ENCODE measurements at regions of chr10 and their contacts with region 1.

Region 1: GRCh38 chr10:18214691-18215563 is 74.7 kb downstream of the CACNB2 start:
- DNase-seq: no peak
- ATAC-seq: peak; percentile 84
- H3K4me3 ChIP-seq: no peak overlapping the region
- H3K27ac ChIP-seq: no peak overlapping the region
- H3K4me1 ChIP-seq: no peaks in the 10 kb centered on the region
- H3K27me3 ChIP-seq: no peaks in the 10 kb centered on the region; a peak in 1 of 4 replicates
- CTCF ChIP-seq: peak; percentile 66 to 82 (median 77)
- EP300 ChIP-seq: no peak
- POLR2A ChIP-seq: no peak
- RAD21 ChIP-seq: peak; percentile 84

Region 2: DNA sequence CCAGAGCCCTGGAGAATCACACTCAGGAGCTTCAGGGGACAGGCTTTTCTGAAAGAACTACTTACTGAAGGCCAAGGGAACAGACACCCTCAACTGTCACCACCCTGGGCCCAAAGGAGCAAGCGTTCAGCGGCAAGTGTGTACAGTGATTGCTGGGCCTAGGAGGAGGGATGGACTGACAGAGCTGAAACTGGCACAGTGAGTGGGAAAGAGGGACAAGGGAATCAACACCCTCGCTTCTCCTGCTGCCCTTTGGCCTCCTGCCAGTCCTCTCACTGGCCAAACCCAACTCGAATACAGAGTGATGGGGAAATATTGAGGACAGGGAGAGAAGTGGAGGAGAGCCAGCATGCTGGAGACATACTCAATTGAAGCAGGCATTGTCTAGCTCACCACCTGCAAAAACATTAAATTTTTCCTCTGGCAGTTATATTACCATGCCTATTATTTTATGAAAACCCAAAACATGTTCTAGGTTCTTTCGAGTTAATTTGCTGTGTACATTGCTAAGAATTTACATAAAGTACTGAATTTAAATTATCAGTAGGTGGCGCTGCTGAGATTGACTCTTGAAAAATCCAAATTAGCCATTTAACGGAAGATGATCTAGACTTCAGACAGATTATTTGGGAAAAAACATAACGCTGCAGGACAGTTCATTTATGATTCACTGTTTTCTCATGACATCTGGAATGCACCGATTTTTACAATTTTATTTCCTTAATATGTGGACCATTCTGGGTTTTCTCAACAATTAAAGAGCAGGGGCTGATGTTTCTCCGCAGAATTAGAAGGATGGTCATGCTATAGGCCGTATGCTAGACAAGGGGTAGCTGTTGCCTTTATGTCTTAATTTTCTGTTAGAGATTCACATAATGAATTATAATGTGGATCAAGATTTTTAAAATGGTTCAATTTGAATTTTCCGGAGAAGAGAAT is 477.6 kb before region 1 on chr10:
- CTCF ChIA-PET with region 1: interaction called, 5 read pairs
- POLR2A ChIA-PET with region 1: no interaction called
- RAD21 ChIA-PET with region 1: no interaction called
- SMC1A ChIA-PET with region 1: no interaction called
- in situ Hi-C with region 1: no loop called
- intact Hi-C with region 1: loop called (anchors 5 kb)
- DNase-seq: no peak
- ATAC-seq: peak; percentile 61
- H3K4me3 ChIP-seq: no peak overlapping the region
- H3K27ac ChIP-seq: no peak overlapping the region
- H3K4me1 ChIP-seq: no peaks in the 10 kb centered on the region
- H3K27me3 ChIP-seq: no peaks in the 10 kb centered on the region
- CTCF ChIP-seq: peak; percentile 40 to 63 (median 58); a peak in 5 of 6 replicates
- EP300 ChIP-seq: no peak
- POLR2A ChIP-seq: no peak
- RAD21 ChIP-seq: peak; percentile 31; the same call in 1 of the 2 replicates

Region 3: GRCh38 chr10:17805921-17806577 is 408.9 kb before region 1 on chr10:
- CTCF ChIA-PET with region 1: no interaction called
- POLR2A ChIA-PET with region 1: no interaction called
- RAD21 ChIA-PET with region 1: no interaction called
- SMC1A ChIA-PET with region 1: no interaction called
- in situ Hi-C with region 1: no loop called
- intact Hi-C with region 1: loop called (anchors 1 kb)
- DNase-seq: no peak
- ATAC-seq: peak; percentile 98
- H3K4me3 ChIP-seq: no peak overlapping the region
- H3K27ac ChIP-seq: no peak overlapping the region
- H3K4me1 ChIP-seq: no peaks in the 10 kb centered on the region
- H3K27me3 ChIP-seq: peaks cover 0 to 5% of the 10 kb centered on the region in 2 experiments; a peak in 2 of 4 replicates
- CTCF ChIP-seq: peak; percentile 39; a peak in 5 of 6 replicates
- EP300 ChIP-seq: no peak
- POLR2A ChIP-seq: no peak
- RAD21 ChIP-seq: peak; percentile 40

Region 4: GRCh38 chr10:17847585-17848296 is 367.2 kb before region 1 on chr10:
- CTCF ChIA-PET with region 1: interaction called, 15 read pairs
- POLR2A ChIA-PET with region 1: no interaction called
- RAD21 ChIA-PET with region 1: interaction called, 9 read pairs
- SMC1A ChIA-PET with region 1: interaction called, 7 read pairs
- in situ Hi-C with region 1: no loop called
- intact Hi-C with region 1: loop called (anchors 1 kb)
- DNase-seq: no peak
- ATAC-seq: peak; percentile 88
- H3K4me3 ChIP-seq: no peak overlapping the region
- H3K27ac ChIP-seq: no peak overlapping the region
- H3K4me1 ChIP-seq: no peaks in the 10 kb centered on the region
- H3K27me3 ChIP-seq: no peaks in the 10 kb centered on the region; a peak in 1 of 4 replicates
- CTCF ChIP-seq: peak; percentile 14 to 53 (median 38); a peak in 4 of 6 replicates
- EP300 ChIP-seq: no peak
- POLR2A ChIP-seq: no peak
- RAD21 ChIP-seq: peak; percentile 70

Region 5: DNA sequence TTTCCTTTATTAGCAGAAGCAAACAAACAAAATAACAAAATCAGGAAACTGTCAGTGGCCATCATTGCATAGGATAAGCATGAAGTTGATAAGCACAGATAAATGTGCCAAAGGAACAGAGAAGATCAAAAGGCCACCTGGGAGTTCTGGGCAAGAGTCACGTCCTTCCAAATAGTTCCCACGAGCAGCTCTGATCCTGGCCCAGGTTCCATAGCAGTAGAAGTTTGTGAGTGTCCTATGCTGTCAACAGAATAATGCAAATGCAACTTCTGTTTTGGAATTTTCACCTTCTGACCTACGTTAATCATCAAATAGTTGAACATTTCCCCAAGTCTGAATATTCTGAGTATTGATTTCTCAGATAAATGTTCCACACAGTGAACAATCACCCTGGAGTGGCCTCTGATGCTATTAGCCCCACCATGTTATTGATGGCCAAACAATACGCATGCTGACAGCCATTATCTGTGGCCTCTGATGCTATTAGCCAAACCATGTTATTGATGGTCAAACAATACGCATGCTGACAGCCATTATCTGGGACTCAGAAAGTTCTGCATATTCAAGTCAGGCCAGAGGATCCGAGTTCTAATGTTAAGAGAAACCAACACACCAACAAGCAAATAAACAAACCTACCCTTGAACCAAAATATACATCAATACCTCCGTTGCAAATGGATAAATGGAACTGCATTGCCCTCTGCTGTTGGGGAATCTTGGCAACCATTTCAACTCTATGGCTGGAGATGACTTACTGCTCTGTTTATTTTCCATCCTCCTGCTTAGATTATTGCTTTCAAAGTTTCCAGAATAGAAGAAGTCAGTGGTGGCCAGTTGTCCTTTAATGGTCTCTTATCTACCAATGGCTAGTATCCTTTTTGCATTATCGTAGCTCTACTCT is 342.5 kb before region 1 on chr10:
- CTCF ChIA-PET with region 1: interaction called, 5 read pairs
- POLR2A ChIA-PET with region 1: no interaction called
- RAD21 ChIA-PET with region 1: no interaction called
- SMC1A ChIA-PET with region 1: no interaction called
- in situ Hi-C with region 1: no loop called
- intact Hi-C with region 1: loop called (anchors 10 kb)
- DNase-seq: no peak
- ATAC-seq: peak; percentile 68
- H3K4me3 ChIP-seq: no peak overlapping the region
- H3K27ac ChIP-seq: no peak overlapping the region
- H3K4me1 ChIP-seq: no peaks in the 10 kb centered on the region
- H3K27me3 ChIP-seq: no peaks in the 10 kb centered on the region
- CTCF ChIP-seq: peak; percentile 33 to 52 (median 35); a peak in 4 of 6 replicates
- EP300 ChIP-seq: no peak
- POLR2A ChIP-seq: no peak
- RAD21 ChIP-seq: peak; percentile 51

Region 6: GRCh38 chr10:17910125-17910789 is 304.7 kb before region 1 on chr10:
- CTCF ChIA-PET with region 1: interaction called, 5 read pairs
- POLR2A ChIA-PET with region 1: no interaction called
- RAD21 ChIA-PET with region 1: interaction called, 3 read pairs
- SMC1A ChIA-PET with region 1: interaction called, 4 read pairs
- in situ Hi-C with region 1: no loop called
- intact Hi-C with region 1: loop called (anchors 1 kb)
- DNase-seq: peak; percentile 2
- ATAC-seq: peak; percentile 85
- H3K4me3 ChIP-seq: no peak overlapping the region
- H3K27ac ChIP-seq: no peak overlapping the region
- H3K4me1 ChIP-seq: no peaks in the 10 kb centered on the region
- H3K27me3 ChIP-seq: no peaks in the 10 kb centered on the region
- CTCF ChIP-seq: peak; percentile 51 to 54 (median 52); a peak in 5 of 6 replicates
- EP300 ChIP-seq: no peak
- POLR2A ChIP-seq: no peak
- RAD21 ChIP-seq: peak; percentile 69

Region 7: GRCh38 chr10:18179891-18180290 is 35.0 kb before region 1 on chr10:
- CTCF ChIA-PET with region 1: no interaction called
- POLR2A ChIA-PET with region 1: no interaction called
- RAD21 ChIA-PET with region 1: no interaction called
- SMC1A ChIA-PET with region 1: no interaction called
- in situ Hi-C with region 1: no loop called
- intact Hi-C with region 1: no loop called
- DNase-seq: no peak
- ATAC-seq: no peak
- H3K4me3 ChIP-seq: no peak overlapping the region
- H3K27ac ChIP-seq: no peak overlapping the region
- H3K4me1 ChIP-seq: no peaks in the 10 kb centered on the region
- H3K27me3 ChIP-seq: no peaks in the 10 kb centered on the region
- CTCF ChIP-seq: no peak
- EP300 ChIP-seq: no peak
- POLR2A ChIP-seq: no peak
- RAD21 ChIP-seq: no peak

Region 8: GRCh38 chr10:18279173-18279572 is 64.2 kb after region 1 on chr10:
- CTCF ChIA-PET with region 1: no interaction called
- POLR2A ChIA-PET with region 1: no interaction called
- RAD21 ChIA-PET with region 1: no interaction called
- SMC1A ChIA-PET with region 1: no interaction called
- in situ Hi-C with region 1: no loop called
- intact Hi-C with region 1: no loop called
- DNase-seq: no peak
- ATAC-seq: no peak
- H3K4me3 ChIP-seq: no peak overlapping the region
- H3K27ac ChIP-seq: no peak overlapping the region
- H3K4me1 ChIP-seq: no peaks in the 10 kb centered on the region
- H3K27me3 ChIP-seq: no peaks in the 10 kb centered on the region
- CTCF ChIP-seq: no peak
- EP300 ChIP-seq: no peak
- POLR2A ChIP-seq: no peak
- RAD21 ChIP-seq: no peak

Region 9: GRCh38 chr10:18312374-18313139 is 97.6 kb after region 1 on chr10:
- CTCF ChIA-PET with region 1: interaction called, 18 read pairs
- POLR2A ChIA-PET with region 1: no interaction called
- RAD21 ChIA-PET with region 1: interaction called, 13 read pairs
- SMC1A ChIA-PET with region 1: interaction called, 11 read pairs
- in situ Hi-C with region 1: no loop called
- intact Hi-C with region 1: loop called (anchors 2 kb)
- DNase-seq: no peak
- ATAC-seq: peak; percentile 91
- H3K4me3 ChIP-seq: no peak overlapping the region
- H3K27ac ChIP-seq: no peak overlapping the region
- H3K4me1 ChIP-seq: no peaks in the 10 kb centered on the region
- H3K27me3 ChIP-seq: no peaks in the 10 kb centered on the region
- CTCF ChIP-seq: peak; percentile 50 to 77 (median 52); a peak in 5 of 6 replicates
- EP300 ChIP-seq: no peak
- POLR2A ChIP-seq: no peak
- RAD21 ChIP-seq: peak; percentile 68